ENCODE measurements at regions of chr9 and their contacts with region 1.

Region 1: GRCh38 chr9:38026021-38026809 is 42.8 kb downstream of the SHB start:
- DNase-seq: no peak
- H3K4me3 ChIP-seq: no peak overlapping the region
- H3K27ac ChIP-seq: peak overlapping the region; percentile 70 to 85 (median 77)
- H3K4me1 ChIP-seq: peaks cover 40 to 58% (median 50%) of the 10 kb centered on the region in 4 donors
- H3K27me3 ChIP-seq: no peaks in the 10 kb centered on the region
- CTCF ChIP-seq: no peak
- EP300 ChIP-seq: no peak
- POLR2A ChIP-seq: no peak

Region 2: GRCh38 chr9:37963936-37964739 is 62.1 kb before region 1 on chr9:
- in situ Hi-C with region 1: loop called in 1 of 4 experiments (anchors 10 kb)
- intact Hi-C with region 1: no loop called
- DNase-seq: peak; percentile 52
- H3K4me3 ChIP-seq: no peak overlapping the region
- H3K27ac ChIP-seq: peak overlapping the region; percentile 66 to 88 (median 77)
- H3K4me1 ChIP-seq: peaks cover 8 to 57% (median 51%) of the 10 kb centered on the region in 4 donors
- H3K27me3 ChIP-seq: no peaks in the 10 kb centered on the region
- CTCF ChIP-seq: no peak
- EP300 ChIP-seq: no peak
- POLR2A ChIP-seq: no peak

Region 3: GRCh38 chr9:38127271-38127882 is 101.2 kb after region 1 on chr9:
- in situ Hi-C with region 1: no loop called
- intact Hi-C with region 1: no loop called
- DNase-seq: no peak
- H3K4me3 ChIP-seq: no peak overlapping the region
- H3K27ac ChIP-seq: no peak overlapping the region
- H3K4me1 ChIP-seq: no peaks in the 10 kb centered on the region
- H3K27me3 ChIP-seq: no peaks in the 10 kb centered on the region
- CTCF ChIP-seq: no peak
- EP300 ChIP-seq: no peak
- POLR2A ChIP-seq: no peak